ENCODE measurements at regions of chr2 and their contacts with region 1.

Region 1: GRCh38 chr2:224039124-224039940 is at the start of gene SERPINE2:
- DNase-seq: peak in 1 of 2 donors; percentile 71
- H3K4me3 ChIP-seq: peak within 1 kb of the TSS; percentile 70 to 73
- H3K27ac ChIP-seq: no peak within 1 kb of the TSS
- H3K4me1 ChIP-seq: peaks cover 0 to 6% of the 10 kb centered on the region in 2 donors
- H3K27me3 ChIP-seq: no peaks in the 10 kb centered on the region
- CTCF ChIP-seq: peak in 2 of 3 experiments; percentile 18 to 43
- total RNA-seq, gene SERPINE2: 86.1 TPM

Region 2: GRCh38 chr2:223993621-223994232 is 45.6 kb before region 1 on chr2:
- intact Hi-C with region 1: loop called (anchors 2 kb)
- DNase-seq: peak in 1 of 2 donors; percentile 80
- H3K4me3 ChIP-seq: no peak overlapping the region
- H3K27ac ChIP-seq: no peak overlapping the region
- H3K4me1 ChIP-seq: no peaks in the 10 kb centered on the region
- H3K27me3 ChIP-seq: no peaks in the 10 kb centered on the region
- CTCF ChIP-seq: peak; percentile 52 to 81 (median 65)

Measured in ascending aorta (tissue), 2 donors.